Naive thymus-derived CD4-positive, alpha-beta T cell (primary cell): ENCODE measurements at regions of chr9 and their contacts with region 1.

Region 1: GRCh38 chr9:129988607-129989361 is 54.2 kb downstream of the FNBP1 start:
- DNase-seq: peak in 4 of 9 donors; percentile 25 to 58 (median 29)
- ATAC-seq: peak; percentile 67
- H3K4me3 ChIP-seq: no peak overlapping the region
- H3K4me3 Mint-ChIP-seq: peak overlapping the region; percentile 18 to 85 (median 48)
- H3K27ac ChIP-seq: peak overlapping the region; percentile 76
- H3K27ac Mint-ChIP-seq: peak overlapping the region; percentile 54 to 98 (median 92)
- H3K4me1 ChIP-seq: peaks cover 43 to 48% of the 10 kb centered on the region in 2 donors
- H3K4me1 Mint-ChIP-seq: peaks cover 44 to 83% (median 73%) of the 10 kb centered on the region in 7 donors
- H3K27me3 ChIP-seq: no peaks in the 10 kb centered on the region
- H3K27me3 Mint-ChIP-seq: no peaks in the 10 kb centered on the region

Region 2: GRCh38 chr9:129962889-129963703 is 25.7 kb before region 1 on chr9:
- CTCF ChIA-PET with region 1: interaction called, 3 read pairs
- POLR2A ChIA-PET with region 1: interaction called, 7 read pairs
- intact Hi-C with region 1: loop called in 1 of 2 experiments (anchors 2 kb)
- DNase-seq: peak; percentile 23 to 92 (median 87)
- ATAC-seq: peak; percentile 98
- H3K4me3 ChIP-seq: peak overlapping the region; percentile 80
- H3K4me3 Mint-ChIP-seq: peak overlapping the region; percentile 66 to 95 (median 88)
- H3K27ac ChIP-seq: peak overlapping the region; percentile 92
- H3K27ac Mint-ChIP-seq: peak overlapping the region; percentile 89 to 99 (median 97)
- H3K4me1 ChIP-seq: peaks cover 34 to 47% of the 10 kb centered on the region in 2 donors
- H3K4me1 Mint-ChIP-seq: peaks cover 54 to 80% (median 67%) of the 10 kb centered on the region in 7 donors
- H3K27me3 ChIP-seq: no peaks in the 10 kb centered on the region
- H3K27me3 Mint-ChIP-seq: no peaks in the 10 kb centered on the region

Region 3: DNA sequence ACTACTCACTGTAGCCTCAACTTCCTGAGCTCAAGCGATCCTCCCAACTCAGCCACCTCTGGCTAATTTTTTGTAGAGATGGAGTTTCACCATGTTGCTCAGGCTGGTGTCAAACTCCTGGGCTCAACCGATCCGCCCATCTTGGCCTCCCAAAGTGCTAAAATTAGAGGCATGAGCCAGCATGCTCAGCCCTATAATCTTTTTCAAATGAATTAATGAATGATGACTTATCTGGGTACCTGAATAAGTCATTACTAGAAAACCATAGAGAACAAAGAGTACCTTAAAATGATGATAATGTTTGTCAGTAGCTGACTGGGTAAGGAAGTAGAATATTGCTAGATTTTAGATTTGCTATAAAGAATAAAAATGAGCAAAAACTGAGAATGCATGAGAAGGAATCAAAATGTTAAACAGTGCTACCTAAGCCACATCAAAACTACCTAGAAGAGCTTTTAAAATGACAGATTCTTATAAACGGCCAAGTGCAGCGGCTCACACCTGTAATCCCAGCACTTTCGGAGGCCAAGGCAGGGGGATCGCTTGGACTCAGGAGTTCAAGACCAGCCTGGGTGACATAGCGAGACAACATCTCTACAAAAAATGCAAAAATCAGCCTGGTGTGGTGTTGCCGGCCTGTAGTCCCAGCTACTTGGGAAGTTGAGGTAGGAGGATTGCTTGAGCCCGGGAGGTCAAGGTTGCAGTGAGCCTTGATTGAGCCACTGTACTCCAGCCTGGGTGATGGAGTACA is 40.6 kb after region 1 on chr9:
- CTCF ChIA-PET with region 1: no interaction called
- POLR2A ChIA-PET with region 1: no interaction called
- intact Hi-C with region 1: loop called in 1 of 2 experiments (anchors 2 kb)
- DNase-seq: no peak
- ATAC-seq: no peak
- H3K4me3 ChIP-seq: peak overlapping the region; percentile 21
- H3K4me3 Mint-ChIP-seq: peak overlapping the region; percentile 58 to 89 (median 74)
- H3K27ac ChIP-seq: peak overlapping the region; percentile 63
- H3K27ac Mint-ChIP-seq: peak overlapping the region; percentile 47 to 98 (median 77)
- H3K4me1 ChIP-seq: peaks cover 66 to 93% of the 10 kb centered on the region in 2 donors
- H3K4me1 Mint-ChIP-seq: peaks cover 60 to 95% (median 88%) of the 10 kb centered on the region in 7 donors
- H3K27me3 ChIP-seq: no peaks in the 10 kb centered on the region
- H3K27me3 Mint-ChIP-seq: no peaks in the 10 kb centered on the region